ENCODE measurements at regions of chr3 and their contacts with region 1.

Region 1: GRCh38 chr3:15256861-15257341 is 50.9 kb downstream of the CAPN7 start:
- DNase-seq: no peak
- ATAC-seq: no peak
- H3K4me3 ChIP-seq: no peak overlapping the region
- H3K27ac ChIP-seq: no peak overlapping the region
- H3K4me1 ChIP-seq: no peaks in the 10 kb centered on the region
- H3K27me3 ChIP-seq: no peaks in the 10 kb centered on the region
- CTCF ChIP-seq: no peak
- POLR2A ChIP-seq: no peak
- RAD21 ChIP-seq: no peak

Region 2: GRCh38 chr3:15215996-15216395 is 40.9 kb before region 1 on chr3:
- CTCF ChIA-PET with region 1: no interaction called
- POLR2A ChIA-PET with region 1: no interaction called
- dilution Hi-C with region 1: no loop called
- in situ Hi-C with region 1: no loop called
- intact Hi-C with region 1: loop called (anchors 5 kb)
- DNase-seq: peak; percentile 42
- ATAC-seq: no peak; the same call in 1 of the 2 replicates
- H3K4me3 ChIP-seq: no peak overlapping the region
- H3K27ac ChIP-seq: no peak overlapping the region; the same call in 1 of the 2 replicates
- H3K4me1 ChIP-seq: no peaks in the 10 kb centered on the region
- H3K27me3 ChIP-seq: no peaks in the 10 kb centered on the region
- CTCF ChIP-seq: no peak
- POLR2A ChIP-seq: no peak
- RAD21 ChIP-seq: no peak

Region 3: GRCh38 chr3:15693355-15693754 is 436.5 kb after region 1 on chr3:
- CTCF ChIA-PET with region 1: no interaction called
- POLR2A ChIA-PET with region 1: no interaction called
- dilution Hi-C with region 1: no loop called
- in situ Hi-C with region 1: no loop called
- intact Hi-C with region 1: loop called (anchors 10 kb)
- DNase-seq: peak; percentile 19
- ATAC-seq: peak; percentile 29; the same call in 1 of the 2 replicates
- H3K4me3 ChIP-seq: no peak overlapping the region
- H3K27ac ChIP-seq: no peak overlapping the region
- H3K4me1 ChIP-seq: no peaks in the 10 kb centered on the region
- H3K27me3 ChIP-seq: no peaks in the 10 kb centered on the region
- CTCF ChIP-seq: peak; percentile 29; the same call in 1 of the 2 replicates
- POLR2A ChIP-seq: no peak
- RAD21 ChIP-seq: peak; percentile 27; the same call in 1 of the 2 replicates

Region 4: DNA sequence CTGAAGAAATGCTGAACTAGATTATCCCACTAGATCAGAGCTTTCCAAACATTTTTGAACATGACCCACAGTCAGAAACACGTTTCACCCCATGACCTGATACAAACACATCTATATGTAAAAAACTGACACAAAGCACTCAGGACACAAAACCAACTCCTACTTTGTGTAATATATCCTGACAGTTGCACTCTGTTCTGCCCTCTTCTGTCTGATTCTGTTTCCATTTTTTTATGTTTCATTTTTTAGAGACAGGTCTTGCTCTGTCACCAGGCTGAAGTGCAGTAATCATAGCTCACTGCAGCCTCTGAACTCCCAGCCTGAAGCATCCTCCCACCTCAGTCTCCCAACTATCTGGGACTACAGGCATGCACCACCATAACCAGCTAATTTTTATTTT is 1272.4 kb after region 1 on chr3:
- CTCF ChIA-PET with region 1: no interaction called
- POLR2A ChIA-PET with region 1: no interaction called
- dilution Hi-C with region 1: no loop called
- in situ Hi-C with region 1: no loop called
- intact Hi-C with region 1: no loop called
- DNase-seq: no peak
- ATAC-seq: no peak
- H3K4me3 ChIP-seq: no peak overlapping the region
- H3K27ac ChIP-seq: no peak overlapping the region
- H3K4me1 ChIP-seq: no peaks in the 10 kb centered on the region
- H3K27me3 ChIP-seq: peaks cover 37% of the 10 kb centered on the region
- CTCF ChIP-seq: peak; percentile 31
- POLR2A ChIP-seq: no peak
- RAD21 ChIP-seq: no peak

Measured in IMR-90 (cell line).